ENCODE measurements at regions of chr17 and their contacts with region 1.

Region 1: GRCh38 chr17:48671697-48672171 is 45.6 kb upstream of the HOXB9 start:
- DNase-seq: peak; percentile 67
- ATAC-seq: peak; percentile 93
- H3K4me3 ChIP-seq: peak overlapping the region; percentile 35
- H3K27ac ChIP-seq: no peak overlapping the region
- H3K4me1 ChIP-seq: no peaks in the 10 kb centered on the region
- H3K27me3 ChIP-seq: peaks cover 26% of the 10 kb centered on the region
- CTCF ChIP-seq: peak; percentile 91
- POLR2A ChIP-seq: no peak
- RAD21 ChIP-seq: peak; percentile 83

Region 2: DNA sequence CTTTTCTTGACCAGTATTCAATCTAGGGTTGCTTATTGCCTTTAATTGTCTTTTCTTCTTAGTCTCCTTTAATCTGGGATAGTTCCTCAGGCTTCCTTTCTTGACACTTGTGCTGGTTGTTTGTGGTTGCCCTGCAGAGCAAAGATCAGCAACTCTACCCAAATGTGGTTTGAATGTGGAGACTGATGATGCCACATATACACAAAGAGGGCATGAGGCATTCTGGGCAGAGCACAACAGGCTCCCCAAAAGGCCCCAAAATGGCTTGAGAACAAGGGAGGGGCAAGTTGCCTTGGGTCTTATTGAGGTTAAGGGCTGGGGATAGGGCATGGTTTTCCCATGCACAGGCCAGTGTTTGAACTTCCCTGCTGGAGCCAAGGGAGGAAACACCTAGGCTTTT is 15.8 kb before region 1 on chr17:
- CTCF ChIA-PET with region 1: no interaction called
- POLR2A ChIA-PET with region 1: no interaction called
- dilution Hi-C with region 1: no loop called
- in situ Hi-C with region 1: no loop called
- intact Hi-C with region 1: no loop called
- DNase-seq: no peak
- ATAC-seq: no peak
- H3K4me3 ChIP-seq: no peak overlapping the region
- H3K27ac ChIP-seq: no peak overlapping the region
- H3K4me1 ChIP-seq: no peaks in the 10 kb centered on the region
- H3K27me3 ChIP-seq: peaks cover 38% of the 10 kb centered on the region
- CTCF ChIP-seq: no peak
- POLR2A ChIP-seq: no peak
- RAD21 ChIP-seq: no peak

Region 3: GRCh38 chr17:48869821-48870318 is 198.1 kb after region 1 on chr17:
- CTCF ChIA-PET with region 1: interaction called, 3 read pairs
- POLR2A ChIA-PET with region 1: interaction called, 14 read pairs
- dilution Hi-C with region 1: no loop called
- in situ Hi-C with region 1: loop called (anchors 5 kb)
- intact Hi-C with region 1: no loop called
- DNase-seq: no peak
- ATAC-seq: no peak
- H3K4me3 ChIP-seq: no peak overlapping the region
- H3K27ac ChIP-seq: no peak overlapping the region
- H3K4me1 ChIP-seq: no peaks in the 10 kb centered on the region; the same call in 1 of the 2 replicates
- H3K27me3 ChIP-seq: peaks cover 4% of the 10 kb centered on the region; the same call in 1 of the 2 replicates
- CTCF ChIP-seq: no peak
- POLR2A ChIP-seq: no peak
- RAD21 ChIP-seq: no peak